GM12878 (cell line): ENCODE measurements at regions of chr4 and their contacts with region 1.

Region 1: GRCh38 chr4:146273204-146273901 is 59.0 kb downstream of the REELD1 start:
- DNase-seq: peak; percentile 94
- ATAC-seq: peak; percentile 78
- H3K4me3 ChIP-seq: peak overlapping the region; percentile 6; the same call in 1 of the 2 replicates
- H3K27ac ChIP-seq: peak overlapping the region; percentile 81
- H3K4me1 ChIP-seq: peaks cover 66% of the 10 kb centered on the region
- H3K27me3 ChIP-seq: no peaks in the 10 kb centered on the region
- CTCF ChIP-seq: no peak
- EP300 ChIP-seq: peak; percentile 76 to 79; a peak in 2 of 4 replicates
- POLR2A ChIP-seq: peak; percentile 48; the same call in 1 of the 2 replicates
- RAD21 ChIP-seq: peak; percentile 5; the same call in 1 of the 2 replicates

Region 2: GRCh38 chr4:145830699-145831098 is 442.7 kb before region 1 on chr4:
- CTCF ChIA-PET with region 1: no interaction called
- POLR2A ChIA-PET with region 1: no interaction called
- RAD21 ChIA-PET with region 1: no interaction called
- SMC1A ChIA-PET with region 1: no interaction called
- in situ Hi-C with region 1: no loop called
- intact Hi-C with region 1: loop called (anchors 2 kb)
- DNase-seq: no peak
- ATAC-seq: peak; percentile 79
- H3K4me3 ChIP-seq: 0 out of 2 replicates have a peak overlapping the region, but pooled peaks have one; percentile 16
- H3K27ac ChIP-seq: peak overlapping the region; percentile 77
- H3K4me1 ChIP-seq: peaks cover 30% of the 10 kb centered on the region
- H3K27me3 ChIP-seq: no peaks in the 10 kb centered on the region
- CTCF ChIP-seq: no peak
- EP300 ChIP-seq: 0 out of 4 replicates have a peak, but pooled peaks of 1 of the 2 experiments have one; percentile 20
- POLR2A ChIP-seq: no peak
- RAD21 ChIP-seq: no peak

Region 3: DNA sequence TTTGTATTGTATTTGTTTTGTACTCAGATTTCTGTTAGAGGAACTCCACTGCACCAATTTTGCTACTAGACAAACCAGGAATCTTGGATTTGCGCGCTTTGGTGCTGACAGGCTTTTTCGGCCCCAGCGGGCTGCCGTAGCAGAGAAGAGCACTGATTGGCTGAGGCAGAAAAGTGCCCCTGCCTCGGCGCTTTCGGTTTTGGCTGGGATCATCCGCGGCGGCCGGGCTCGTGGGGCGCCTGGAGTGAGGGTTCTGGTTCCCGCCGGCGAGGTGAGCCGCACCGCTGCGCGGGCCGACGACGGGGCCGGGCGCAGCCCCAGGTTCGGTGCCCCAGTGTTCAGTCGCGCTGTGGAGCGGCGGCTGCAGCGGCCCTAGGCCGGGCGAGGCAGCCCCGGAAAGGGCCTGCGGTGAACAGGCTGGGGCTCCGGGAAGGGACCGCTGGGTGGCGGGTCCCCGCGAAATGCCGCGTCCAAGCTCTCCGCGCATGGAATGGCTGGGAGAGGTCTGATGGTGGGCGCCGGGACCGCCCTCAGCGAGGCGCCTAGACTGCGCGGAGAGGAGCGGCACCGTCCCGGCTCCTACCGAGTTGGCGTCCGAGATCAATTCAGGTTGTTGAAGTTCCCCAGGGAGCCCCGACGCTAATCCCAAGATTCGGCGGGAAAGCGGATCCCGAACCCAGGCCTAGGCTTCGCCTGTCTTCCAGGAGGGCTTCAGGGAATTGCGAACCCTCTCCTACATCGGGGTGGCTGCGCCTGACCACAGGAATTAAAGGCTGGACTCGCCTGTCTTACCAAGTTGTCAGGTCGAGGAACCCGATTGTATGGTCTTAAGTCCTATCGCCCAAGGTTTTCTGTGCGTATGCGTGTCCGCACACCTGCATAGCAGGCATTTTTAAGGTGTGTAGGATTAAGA is 97.6 kb before region 1 on chr4 and contains the start of gene LSM6:
- CTCF ChIA-PET with region 1: interaction called, 3 read pairs
- POLR2A ChIA-PET with region 1: no interaction called
- RAD21 ChIA-PET with region 1: no interaction called
- SMC1A ChIA-PET with region 1: interaction called, 4 read pairs
- in situ Hi-C with region 1: no loop called
- intact Hi-C with region 1: loop called (anchors 5 kb)
- DNase-seq: peak; percentile 36
- ATAC-seq: peak; percentile 89
- H3K4me3 ChIP-seq: peak within 1 kb of the TSS; percentile 84
- H3K27ac ChIP-seq: peak within 1 kb of the TSS; percentile 92
- H3K4me1 ChIP-seq: peaks cover 13% of the 10 kb centered on the region
- H3K27me3 ChIP-seq: no peaks in the 10 kb centered on the region
- CTCF ChIP-seq: no peak
- EP300 ChIP-seq: no peak
- POLR2A ChIP-seq: peak; percentile 87
- RAD21 ChIP-seq: no peak
- polyA plus RNA-seq, gene LSM6: 261 to 262 TPM

Region 4: DNA sequence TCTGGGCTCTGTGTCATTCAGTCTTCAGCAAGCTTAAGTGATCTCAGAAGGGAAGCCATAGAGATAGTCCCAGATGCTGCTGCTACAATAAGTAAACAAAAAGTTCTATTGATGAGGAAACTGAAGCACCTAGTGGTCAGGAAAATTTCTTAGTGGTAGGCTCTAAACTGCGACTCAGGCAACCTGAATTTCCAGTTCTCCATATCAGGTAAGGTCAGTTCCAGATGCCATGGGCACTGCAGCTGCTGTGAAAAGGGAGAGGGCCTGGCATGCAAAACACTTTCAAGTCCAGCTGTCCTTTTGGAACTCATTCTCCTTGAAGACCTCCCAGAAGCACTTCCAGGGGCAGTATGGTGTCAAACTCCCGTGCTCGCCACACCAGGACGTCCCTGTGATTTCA is 12.8 kb before region 1 on chr4:
- CTCF ChIA-PET with region 1: interaction called, 8 read pairs
- POLR2A ChIA-PET with region 1: interaction called, 4 read pairs
- RAD21 ChIA-PET with region 1: interaction called, 11 read pairs
- SMC1A ChIA-PET with region 1: interaction called, 28 read pairs
- in situ Hi-C with region 1: no loop called
- intact Hi-C with region 1: no loop called
- DNase-seq: no peak
- ATAC-seq: no peak
- H3K4me3 ChIP-seq: no peak overlapping the region
- H3K27ac ChIP-seq: no peak overlapping the region
- H3K4me1 ChIP-seq: no peaks in the 10 kb centered on the region
- H3K27me3 ChIP-seq: no peaks in the 10 kb centered on the region
- CTCF ChIP-seq: no peak
- EP300 ChIP-seq: no peak
- POLR2A ChIP-seq: no peak
- RAD21 ChIP-seq: no peak

Region 5: DNA sequence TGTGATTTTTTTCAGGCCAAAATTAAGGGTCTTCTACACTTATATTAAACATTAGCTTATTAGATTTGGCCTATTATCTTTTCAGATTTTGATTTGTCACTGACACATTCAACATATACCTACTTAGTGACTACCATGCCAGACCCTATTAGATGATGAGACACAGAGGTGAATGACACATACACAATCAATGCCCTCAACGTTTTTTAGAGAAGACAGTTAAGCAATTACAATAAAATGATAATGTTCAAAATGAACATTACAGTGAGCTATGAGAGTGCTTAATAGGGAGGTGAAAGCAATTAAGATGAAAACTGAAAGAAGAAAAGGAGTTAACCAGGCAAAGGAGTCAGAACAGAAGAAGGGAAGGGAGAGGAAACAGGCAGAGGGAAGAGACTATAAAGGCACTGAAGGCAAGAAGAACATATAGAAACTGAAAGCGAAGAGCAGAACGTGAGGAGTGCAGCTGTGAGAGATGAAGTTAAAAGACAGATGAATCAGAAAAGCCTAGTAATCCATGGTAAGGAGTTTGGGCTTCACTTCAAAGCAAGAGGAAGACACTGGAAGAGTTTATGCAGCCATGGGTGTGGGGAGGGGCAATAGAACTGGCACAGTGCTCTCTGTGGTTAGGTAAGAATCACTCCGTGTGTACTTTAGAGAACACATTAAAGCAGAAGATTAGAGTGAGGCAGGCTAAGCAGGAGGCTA is 60.0 kb after region 1 on chr4:
- CTCF ChIA-PET with region 1: interaction called, 173 read pairs
- POLR2A ChIA-PET with region 1: interaction called, 27 read pairs
- RAD21 ChIA-PET with region 1: interaction called, 159 read pairs
- SMC1A ChIA-PET with region 1: interaction called, 121 read pairs
- in situ Hi-C with region 1: no loop called
- intact Hi-C with region 1: loop called (anchors 1 kb)
- DNase-seq: peak; percentile 59
- ATAC-seq: peak; percentile 88
- H3K4me3 ChIP-seq: peak overlapping the region; percentile 54
- H3K27ac ChIP-seq: peak overlapping the region; percentile 38
- H3K4me1 ChIP-seq: peaks cover 13% of the 10 kb centered on the region; the same call in 1 of the 2 replicates
- H3K27me3 ChIP-seq: no peaks in the 10 kb centered on the region
- CTCF ChIP-seq: no peak
- EP300 ChIP-seq: no peak
- POLR2A ChIP-seq: no peak
- RAD21 ChIP-seq: no peak